Cardiac septum (tissue), 1 donor: ENCODE measurements at regions of chr20 and their contacts with region 1.

Region 1: DNA sequence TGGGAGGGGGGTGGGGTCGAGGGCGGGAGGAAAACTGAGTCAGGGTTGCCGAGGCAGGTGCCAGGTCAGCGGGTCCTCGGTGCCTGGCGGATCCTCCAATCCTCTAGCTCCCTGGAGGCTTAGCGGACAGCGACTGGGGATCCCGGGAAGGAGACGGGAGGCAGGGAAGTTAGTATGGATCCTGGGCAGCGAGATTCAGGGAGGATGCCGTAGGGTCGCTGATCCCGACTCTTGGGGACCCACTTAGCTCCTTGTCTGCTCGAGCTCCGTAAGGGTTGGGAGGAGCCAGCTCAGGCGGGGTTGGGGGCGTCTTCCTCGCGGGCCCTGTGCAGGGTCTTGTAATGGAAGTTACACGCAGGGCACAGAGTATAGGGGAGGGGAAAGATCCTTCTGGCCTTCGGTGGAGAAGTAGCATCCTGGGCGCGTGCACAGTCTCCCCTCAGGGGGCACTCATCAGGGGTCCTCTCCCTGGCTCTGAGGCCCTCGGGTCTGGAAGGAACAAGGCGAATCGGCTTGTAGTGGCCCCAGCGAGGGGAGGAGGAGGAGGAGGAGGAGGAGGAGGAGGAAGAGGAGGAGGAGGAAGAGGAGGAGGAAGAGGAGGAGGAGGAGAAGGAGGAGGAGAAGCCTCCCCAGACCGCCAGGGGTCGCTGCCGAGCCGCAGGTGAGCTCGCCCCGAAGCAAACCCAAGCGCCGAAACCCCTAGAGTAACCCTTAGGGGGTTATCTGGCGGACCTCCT is 6.4 kb upstream of the SLC12A5 start:
- DNase-seq: peak; percentile 87

Region 2: DNA sequence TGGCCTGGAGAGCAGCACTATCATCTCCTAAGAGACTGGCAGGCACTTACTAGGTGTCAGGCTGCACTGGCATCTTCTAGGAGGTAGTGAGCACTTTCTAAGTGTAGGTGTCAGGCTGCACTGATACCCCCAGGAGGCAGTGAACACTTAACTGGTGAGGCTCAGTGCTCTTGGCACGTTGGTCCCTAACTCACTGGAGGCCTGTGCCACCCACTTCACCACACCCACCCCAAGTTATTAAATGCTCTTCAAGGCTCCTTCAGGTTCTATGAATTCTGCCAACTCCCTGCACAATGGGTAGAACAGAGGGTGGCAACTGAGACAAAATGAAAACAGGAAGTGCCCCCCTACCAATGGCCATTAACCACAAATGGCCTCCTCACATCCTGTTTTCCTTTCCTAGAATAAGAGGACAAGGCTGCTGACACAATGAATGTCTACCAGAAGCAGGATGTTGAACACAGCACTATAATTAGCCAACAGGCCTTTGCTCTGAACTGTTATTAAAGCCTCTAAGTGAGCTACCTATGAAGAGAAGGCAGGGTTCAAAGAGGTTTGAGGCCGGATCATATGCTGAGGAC is 37.8 kb after region 1 on chr20:
- intact Hi-C with region 1: loop called (anchors 5 kb)
- DNase-seq: no peak